ENCODE measurements at regions of chrX and their contacts with region 1.

Region 1: DNA sequence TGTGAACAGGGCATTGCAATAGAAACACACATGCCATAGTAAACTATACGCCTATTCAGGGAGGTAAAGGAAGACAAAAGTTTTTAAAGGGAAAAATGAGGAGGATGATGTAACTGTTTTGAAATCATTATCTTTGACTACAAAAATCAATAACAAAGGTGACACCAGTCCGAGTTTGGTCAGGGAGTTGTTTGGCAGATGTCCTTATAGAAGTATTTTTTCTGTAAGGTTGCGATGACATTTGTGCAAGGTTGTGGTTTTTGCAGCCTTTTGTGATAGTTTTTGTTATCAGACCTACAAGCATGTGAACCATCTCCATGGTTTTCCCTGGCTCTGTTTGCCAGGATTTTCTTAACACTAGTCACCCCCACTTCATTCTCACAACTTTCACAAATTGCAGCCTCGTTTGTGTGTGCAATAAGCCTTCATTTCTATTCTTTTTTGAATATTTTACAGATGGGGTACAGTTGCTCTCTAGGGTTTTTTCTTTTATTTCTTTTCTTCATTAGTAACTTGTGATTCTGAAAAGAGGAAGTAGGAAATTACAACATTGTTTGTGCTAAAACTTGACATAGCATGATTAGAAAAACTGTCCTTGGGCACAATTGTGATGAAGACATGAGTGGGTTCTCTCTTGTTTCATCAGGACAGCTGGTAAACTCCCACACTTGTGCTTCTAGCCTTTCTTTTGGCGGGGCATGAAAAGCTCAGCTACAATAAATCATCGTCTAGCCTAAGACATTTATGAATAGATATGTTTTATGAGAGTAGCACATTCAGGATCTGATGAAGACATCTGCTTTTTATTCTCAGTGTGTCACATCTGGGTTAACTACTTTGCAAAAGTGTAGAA is 60.2 kb upstream of the PNPLA4 start:
- DNase-seq: peak; percentile 4
- ATAC-seq: no peak
- H3K4me3 ChIP-seq: no peak overlapping the region
- H3K27ac ChIP-seq: no peak overlapping the region
- H3K4me1 ChIP-seq: no peaks in the 10 kb centered on the region
- H3K27me3 ChIP-seq: no peaks in the 10 kb centered on the region
- CTCF ChIP-seq: no peak
- POLR2A ChIP-seq: no peak
- RAD21 ChIP-seq: no peak

Region 2: DNA sequence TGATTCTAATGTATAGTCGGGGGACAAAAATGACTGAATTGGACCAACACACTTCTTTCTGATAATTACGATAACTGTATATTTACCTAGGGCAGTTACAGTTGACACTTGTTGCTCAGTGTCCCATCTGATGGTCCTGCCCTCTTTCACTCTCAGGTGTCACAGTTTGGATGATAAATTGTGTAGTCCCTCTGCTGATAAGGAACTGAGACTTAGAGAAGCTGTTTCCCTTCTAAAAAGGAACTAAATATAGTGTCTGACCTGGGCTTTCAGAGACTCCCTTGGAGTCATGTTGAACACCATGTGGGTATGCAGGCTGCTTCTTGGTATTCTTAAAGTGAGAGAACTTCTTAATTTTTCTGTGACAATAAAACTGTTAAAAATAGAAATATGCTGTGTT is 36.5 kb before region 1 on chrX:
- CTCF ChIA-PET with region 1: no interaction called
- POLR2A ChIA-PET with region 1: no interaction called
- dilution Hi-C with region 1: no loop called
- in situ Hi-C with region 1: no loop called
- intact Hi-C with region 1: loop called (anchors 1 kb)
- DNase-seq: no peak
- ATAC-seq: no peak
- H3K4me3 ChIP-seq: no peak overlapping the region
- H3K27ac ChIP-seq: no peak overlapping the region
- H3K4me1 ChIP-seq: no peaks in the 10 kb centered on the region
- H3K27me3 ChIP-seq: no peaks in the 10 kb centered on the region
- CTCF ChIP-seq: no peak
- POLR2A ChIP-seq: no peak
- RAD21 ChIP-seq: no peak

Region 3: DNA sequence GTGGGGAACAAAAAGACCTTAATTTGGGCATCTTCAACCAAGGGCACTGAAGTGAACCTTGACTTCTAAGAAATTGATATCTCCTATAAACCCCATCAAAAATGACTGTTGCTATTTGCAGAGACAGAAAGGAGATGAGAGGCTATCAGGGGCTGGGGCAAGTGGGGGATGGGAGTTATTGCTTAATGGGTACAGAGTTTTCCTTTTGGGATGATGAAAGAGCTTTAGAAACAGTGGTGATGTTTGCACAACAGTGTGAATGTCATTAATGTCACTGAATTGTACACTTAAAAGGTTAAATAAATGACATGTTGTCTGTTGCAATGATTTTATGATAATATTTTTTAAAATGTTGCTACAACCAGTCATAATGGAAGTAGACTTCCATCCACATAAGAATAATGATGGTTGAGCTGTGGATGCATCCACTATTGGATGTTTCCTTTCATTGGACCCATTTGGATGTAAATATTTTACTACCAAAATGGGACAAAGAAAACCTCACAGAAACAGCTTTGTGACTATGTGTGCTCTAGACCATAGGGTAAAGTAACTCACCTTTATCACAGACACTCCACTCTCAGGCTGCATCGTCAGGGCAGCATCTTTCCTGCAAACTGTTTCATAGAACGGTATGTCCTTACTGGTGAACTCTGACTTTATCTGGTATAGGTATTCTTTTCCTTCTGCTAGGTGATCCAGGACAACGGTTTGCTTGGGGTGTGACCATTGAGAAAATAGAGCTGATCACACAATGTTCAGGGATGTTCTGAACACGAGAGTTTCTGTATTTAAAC is 845.4 kb after region 1 on chrX:
- CTCF ChIA-PET with region 1: no interaction called
- POLR2A ChIA-PET with region 1: no interaction called
- dilution Hi-C with region 1: no loop called
- in situ Hi-C with region 1: no loop called
- intact Hi-C with region 1: no loop called
- DNase-seq: no peak
- ATAC-seq: no peak
- H3K4me3 ChIP-seq: no peak overlapping the region
- H3K27ac ChIP-seq: no peak overlapping the region
- H3K4me1 ChIP-seq: no peaks in the 10 kb centered on the region
- H3K27me3 ChIP-seq: no peaks in the 10 kb centered on the region; the same call in 1 of the 2 replicates
- CTCF ChIP-seq: no peak
- POLR2A ChIP-seq: no peak
- RAD21 ChIP-seq: no peak

Region 4: GRCh38 chrX:8906299-8906938 is 919.0 kb after region 1 on chrX:
- CTCF ChIA-PET with region 1: no interaction called
- POLR2A ChIA-PET with region 1: no interaction called
- dilution Hi-C with region 1: no loop called
- in situ Hi-C with region 1: no loop called
- intact Hi-C with region 1: no loop called
- DNase-seq: no peak
- ATAC-seq: no peak
- H3K4me3 ChIP-seq: no peak overlapping the region
- H3K27ac ChIP-seq: no peak overlapping the region
- H3K4me1 ChIP-seq: no peaks in the 10 kb centered on the region
- H3K27me3 ChIP-seq: peaks cover 7% of the 10 kb centered on the region; the same call in 1 of the 2 replicates
- CTCF ChIP-seq: no peak
- POLR2A ChIP-seq: no peak
- RAD21 ChIP-seq: no peak

Measured in IMR-90 (cell line).